Calu3 (cell line): ENCODE measurements at regions of chr14 and their contacts with region 1.

Region 1: GRCh38 chr14:93655078-93655750 is 133.1 kb downstream of the PRIMA1 start:
- DNase-seq: peak; percentile 31
- H3K4me3 Mint-ChIP-seq: no peak overlapping the region
- H3K27ac Mint-ChIP-seq: no peak overlapping the region
- H3K4me1 Mint-ChIP-seq: no peaks in the 10 kb centered on the region
- H3K27me3 Mint-ChIP-seq: peaks cover 47% of the 10 kb centered on the region
- CTCF ChIP-seq: peak; percentile 21

Region 2: GRCh38 chr14:93788543-93789227 is 133.5 kb after region 1 on chr14:
- CTCF ChIA-PET with region 1: no interaction called
- intact Hi-C with region 1: loop called (anchors 2 kb)
- DNase-seq: peak; percentile 20
- H3K4me3 Mint-ChIP-seq: peak overlapping the region; percentile 59
- H3K27ac Mint-ChIP-seq: no peak overlapping the region
- H3K4me1 Mint-ChIP-seq: no peaks in the 10 kb centered on the region
- H3K27me3 Mint-ChIP-seq: peaks cover 100% of the 10 kb centered on the region
- CTCF ChIP-seq: no peak

Region 3: DNA sequence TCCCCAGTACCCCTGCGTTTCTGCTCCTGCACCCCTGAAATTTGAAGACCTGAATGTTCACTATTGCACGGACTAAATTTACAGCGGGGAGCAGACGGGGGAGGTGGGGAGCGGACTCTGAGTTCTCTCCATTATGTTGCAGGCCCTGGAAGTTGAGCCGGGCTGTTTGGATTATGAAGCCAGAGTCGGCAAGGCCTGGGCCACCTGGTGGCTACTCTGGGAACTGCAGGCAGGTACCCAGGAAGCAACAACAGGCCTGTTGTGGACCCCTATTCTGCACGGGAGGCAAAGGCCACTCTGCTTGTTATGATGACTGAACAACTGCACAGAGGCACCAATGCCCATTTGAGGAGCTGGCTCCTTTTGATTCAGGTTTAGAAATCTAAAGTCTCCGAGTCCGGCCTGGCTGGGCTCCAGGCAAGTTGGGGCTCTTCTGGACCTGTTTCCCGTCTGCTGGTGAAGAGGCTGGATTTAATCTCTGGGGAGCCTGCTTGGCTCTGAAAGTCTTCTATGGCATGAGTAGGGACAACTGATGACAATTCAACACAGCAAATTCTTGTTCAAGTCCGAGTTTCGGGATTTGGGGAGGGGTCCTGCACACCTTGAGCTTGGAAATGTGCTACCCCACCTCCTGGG is 237.8 kb after region 1 on chr14:
- CTCF ChIA-PET with region 1: no interaction called
- intact Hi-C with region 1: loop called (anchors 1 kb)
- DNase-seq: peak; percentile 85
- H3K4me3 Mint-ChIP-seq: no peak overlapping the region
- H3K27ac Mint-ChIP-seq: no peak overlapping the region
- H3K4me1 Mint-ChIP-seq: no peaks in the 10 kb centered on the region
- H3K27me3 Mint-ChIP-seq: peaks cover 71% of the 10 kb centered on the region
- CTCF ChIP-seq: peak; percentile 96

Region 4: GRCh38 chr14:93906341-93907329 is 251.4 kb after region 1 on chr14:
- CTCF ChIA-PET with region 1: interaction called, 9 read pairs
- intact Hi-C with region 1: loop called (anchors 1 kb)
- DNase-seq: peak; percentile 72
- H3K4me3 Mint-ChIP-seq: no peak overlapping the region
- H3K27ac Mint-ChIP-seq: no peak overlapping the region
- H3K4me1 Mint-ChIP-seq: no peaks in the 10 kb centered on the region
- H3K27me3 Mint-ChIP-seq: peaks cover 83% of the 10 kb centered on the region
- CTCF ChIP-seq: peak; percentile 47